ENCODE measurements at regions of chrX and their contacts with region 1.

Region 1: DNA sequence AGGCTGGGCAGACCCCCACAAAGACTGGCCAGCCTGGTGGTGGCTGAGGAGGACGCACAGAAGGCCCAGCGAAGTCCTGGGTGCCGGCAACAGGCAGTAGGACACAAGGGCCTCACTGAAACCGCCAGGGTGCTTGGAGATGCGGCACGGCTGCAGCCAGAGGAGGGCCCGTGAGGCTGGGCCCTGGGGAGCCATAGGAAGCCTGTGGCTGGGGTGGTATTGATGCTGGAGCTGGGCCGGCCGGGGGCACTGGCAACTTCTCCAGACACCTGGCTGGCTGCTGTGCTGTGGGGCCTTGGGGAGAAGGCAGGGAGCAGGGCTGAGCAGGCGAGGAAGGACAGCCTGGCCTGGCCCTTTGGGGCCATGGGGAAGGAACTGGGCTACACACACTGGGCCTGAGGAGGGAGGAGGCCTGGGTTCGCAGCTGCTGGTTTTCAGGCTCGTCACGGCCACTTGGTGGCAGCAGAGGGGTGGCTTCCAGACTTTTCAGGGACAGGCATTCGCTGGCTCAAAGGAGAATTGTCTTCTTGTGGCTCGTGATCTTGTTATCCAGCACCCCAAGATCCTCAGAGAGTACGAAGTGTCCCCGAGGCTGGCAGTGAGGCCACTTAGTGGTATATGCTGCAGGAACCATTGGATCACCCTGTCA is 37.2 kb downstream of the ATP2B3 start:
- DNase-seq: peak; percentile 68 to 72
- H3K4me3 ChIP-seq: no peak overlapping the region
- H3K4me3 Mint-ChIP-seq: no peak overlapping the region
- H3K27ac Mint-ChIP-seq: no peak overlapping the region
- H3K4me1 ChIP-seq: no peaks in the 10 kb centered on the region
- H3K4me1 Mint-ChIP-seq: no peaks in the 10 kb centered on the region
- H3K27me3 ChIP-seq: no peaks in the 10 kb centered on the region
- H3K27me3 Mint-ChIP-seq: peaks cover 2% of the 10 kb centered on the region
- CTCF ChIP-seq: peak; percentile 65 to 78

Region 2: DNA sequence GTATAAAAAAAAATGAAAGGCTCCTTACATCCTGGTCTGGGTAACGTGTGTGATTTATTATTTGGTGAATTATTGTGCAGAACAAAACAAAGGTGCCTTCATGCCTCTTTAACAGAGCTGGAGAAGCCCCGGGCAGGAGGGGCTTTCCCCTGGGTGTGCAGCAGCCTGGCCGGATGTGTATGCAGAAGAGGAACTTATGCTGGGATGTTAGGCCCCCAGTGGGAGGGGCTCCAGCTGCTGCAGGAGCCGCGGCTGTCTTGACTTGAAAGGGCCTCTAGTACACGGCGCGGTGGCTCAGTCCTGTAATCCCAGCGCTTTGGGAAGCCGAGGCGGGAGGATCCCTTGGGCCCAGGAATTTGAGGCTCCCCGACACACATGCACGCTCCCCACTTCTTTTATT is 28.3 kb after region 1 on chrX:
- CTCF ChIA-PET with region 1: no interaction called
- POLR2A ChIA-PET with region 1: no interaction called
- intact Hi-C with region 1: no loop called
- DNase-seq: no peak
- H3K4me3 ChIP-seq: no peak overlapping the region
- H3K4me3 Mint-ChIP-seq: no peak overlapping the region
- H3K27ac Mint-ChIP-seq: no peak overlapping the region
- H3K4me1 ChIP-seq: no peaks in the 10 kb centered on the region
- H3K4me1 Mint-ChIP-seq: no peaks in the 10 kb centered on the region
- H3K27me3 ChIP-seq: no peaks in the 10 kb centered on the region
- H3K27me3 Mint-ChIP-seq: no peaks in the 10 kb centered on the region
- CTCF ChIP-seq: no peak

Region 3: DNA sequence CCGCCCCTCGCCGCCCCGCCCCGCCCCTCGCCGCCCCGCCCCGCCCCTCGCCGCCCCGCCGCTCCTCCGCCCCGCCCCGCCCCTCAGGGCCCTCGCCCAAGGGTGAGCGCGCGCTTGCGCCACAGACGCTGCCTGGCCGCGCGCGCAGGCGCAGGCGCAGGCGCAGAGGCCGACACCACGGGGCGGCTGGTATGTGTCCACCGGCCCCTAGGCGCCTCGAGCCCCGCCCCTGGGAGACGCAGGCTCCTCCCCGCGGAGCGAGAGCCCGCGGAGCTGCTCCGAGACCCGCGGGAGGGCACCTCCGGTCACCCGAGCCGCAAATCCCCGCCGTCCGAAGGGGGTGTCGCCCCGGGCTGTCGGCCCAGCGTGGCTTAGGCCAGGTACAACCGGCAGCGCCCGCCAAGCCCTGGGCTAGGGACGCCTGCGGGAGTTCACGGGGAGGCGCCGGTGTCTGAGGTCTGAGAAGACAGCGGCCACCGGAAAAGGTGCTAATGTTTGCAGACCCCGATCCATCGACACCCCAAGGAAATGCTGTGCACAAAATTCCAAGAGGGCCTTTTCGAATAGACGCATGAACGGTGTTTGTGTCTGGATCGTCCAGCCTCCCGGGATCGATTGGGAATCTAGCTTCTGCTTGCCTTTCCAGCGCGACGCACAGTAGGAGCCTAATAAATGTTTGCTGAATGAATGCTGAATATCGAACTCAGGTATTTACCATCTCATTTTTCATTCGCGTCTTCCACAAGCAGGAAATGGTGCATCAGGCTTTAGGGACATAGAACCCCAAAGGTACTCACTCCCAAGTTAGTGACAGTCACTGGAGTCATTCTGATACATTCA is 44.8 kb after region 1 on chrX:
- CTCF ChIA-PET with region 1: no interaction called
- POLR2A ChIA-PET with region 1: no interaction called
- intact Hi-C with region 1: loop called (anchors 5 kb)
- DNase-seq: peak; percentile 88 to 91
- H3K4me3 ChIP-seq: peak overlapping the region; percentile 60
- H3K4me3 Mint-ChIP-seq: peak overlapping the region; percentile 80
- H3K27ac Mint-ChIP-seq: no peak overlapping the region
- H3K4me1 ChIP-seq: no peaks in the 10 kb centered on the region
- H3K4me1 Mint-ChIP-seq: peaks cover 6% of the 10 kb centered on the region
- H3K27me3 ChIP-seq: no peaks in the 10 kb centered on the region
- H3K27me3 Mint-ChIP-seq: no peaks in the 10 kb centered on the region
- CTCF ChIP-seq: no peak